ENCODE measurements at regions of chr1 and their contacts with region 1.

Region 1: DNA sequence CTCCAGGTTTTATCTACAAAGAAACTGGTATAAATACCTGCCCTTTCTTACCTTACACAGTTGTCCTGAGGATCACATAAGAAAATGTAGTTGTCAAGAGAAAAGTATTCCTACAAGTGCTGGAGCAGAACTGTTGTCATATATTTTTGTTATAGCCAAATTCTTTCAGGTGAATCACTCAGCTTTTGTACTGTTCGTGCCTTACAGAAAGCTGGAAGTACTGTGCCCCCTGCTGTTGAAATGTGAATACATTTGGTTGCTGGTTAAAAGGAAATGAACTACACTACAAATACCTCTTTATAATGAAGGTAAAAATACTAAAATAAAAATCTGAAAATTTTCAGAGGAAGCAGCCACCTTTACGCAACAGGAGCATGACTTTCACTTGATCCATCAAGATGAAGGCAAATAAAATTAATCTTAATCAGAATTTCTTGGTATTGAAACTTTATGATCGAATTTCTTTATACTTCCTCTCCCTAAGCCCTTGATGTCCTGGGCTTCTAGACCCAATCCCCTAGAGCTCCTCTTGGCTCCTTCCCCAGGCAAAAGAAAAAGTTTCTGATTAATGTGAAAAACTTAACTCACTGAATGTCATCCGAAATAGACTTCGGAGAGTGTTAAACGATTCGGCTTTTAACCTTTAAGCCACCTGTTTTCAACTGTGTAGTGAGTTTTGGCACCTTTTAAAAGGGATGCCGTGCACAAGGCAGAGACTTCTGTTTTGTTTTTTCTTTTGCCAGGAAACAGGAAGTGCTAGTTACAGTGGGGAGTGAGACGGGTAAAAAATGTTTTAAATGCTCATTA is 12.5 kb downstream of the CHML start:
- DNase-seq: peak in 2 of 6 donors; percentile 31 to 41
- ATAC-seq: peak in 3 of 4 donors; percentile 77 to 89 (median 88)
- H3K4me3 ChIP-seq: no peak overlapping the region
- H3K27ac ChIP-seq: no peak overlapping the region
- H3K4me1 ChIP-seq: no peaks in the 10 kb centered on the region
- H3K27me3 ChIP-seq: no peaks in the 10 kb centered on the region
- CTCF ChIP-seq: peak in 3 of 4 donors; percentile 30 to 44 (median 35)

Region 2: DNA sequence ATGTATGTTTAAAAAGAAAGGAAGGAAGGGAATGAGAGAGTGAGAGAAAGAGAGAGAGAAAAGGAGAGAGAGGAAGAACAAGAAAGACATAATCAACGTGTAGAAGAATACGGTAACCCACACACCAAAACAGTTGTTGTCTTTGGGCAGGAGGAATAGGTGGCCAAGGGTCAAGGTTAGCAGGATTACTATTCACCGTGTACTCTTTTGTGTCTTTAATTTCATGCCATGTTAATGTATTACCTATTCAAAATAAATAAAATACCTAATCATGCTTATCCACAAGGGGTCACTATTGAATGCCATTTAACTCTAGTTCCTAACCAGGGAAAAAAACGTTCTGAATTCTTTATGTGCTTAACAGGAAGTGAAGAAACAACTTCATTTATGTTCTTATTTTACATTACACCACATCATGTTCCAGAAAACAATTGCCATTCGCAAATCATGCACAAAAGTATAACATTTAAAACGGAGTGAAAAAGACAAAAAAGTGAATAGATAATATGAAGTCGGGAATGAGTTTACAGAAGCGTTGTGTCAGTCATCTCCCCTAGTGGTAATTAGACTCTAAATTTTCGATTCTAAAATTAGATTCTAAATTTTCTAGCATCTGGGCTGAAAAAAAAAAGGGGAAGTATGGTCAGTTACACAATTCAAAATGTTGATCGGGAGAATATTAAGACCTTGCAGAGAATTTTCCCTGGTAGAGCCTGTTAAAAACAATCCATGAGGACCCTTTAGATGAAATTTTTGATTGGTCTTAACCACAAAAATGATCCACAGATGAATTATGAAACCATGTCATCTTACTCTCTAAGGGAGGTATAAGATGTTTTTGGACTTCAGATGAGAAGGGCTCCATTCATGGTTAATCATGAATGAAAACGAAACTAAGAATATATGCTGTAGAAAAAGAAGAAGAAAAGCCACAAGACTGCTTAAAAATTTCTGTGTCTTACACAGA is 96.2 kb before region 1 on chr1:
- intact Hi-C with region 1: loop called in 1 of 3 experiments (anchors 10 kb)
- DNase-seq: no peak
- ATAC-seq: peak; percentile 92 to 97 (median 96)
- H3K4me3 ChIP-seq: peak overlapping the region; percentile 6 to 47 (median 26)
- H3K27ac ChIP-seq: peak overlapping the region in 2 of 4 donors; percentile 10 to 67
- H3K4me1 ChIP-seq: no peaks in the 10 kb centered on the region
- H3K27me3 ChIP-seq: no peaks in the 10 kb centered on the region
- CTCF ChIP-seq: peak in 3 of 4 donors; percentile 41 to 49 (median 43)